Vagina (tissue), 2 donors: ENCODE measurements at regions of chr5 and their contacts with region 1.

Region 1: GRCh38 chr5:139787568-139788293 is 7.9 kb upstream of the PSD2 start:
- DNase-seq: no peak
- H3K4me3 ChIP-seq: peak overlapping the region; percentile 46 to 52
- H3K27ac ChIP-seq: peak overlapping the region; percentile 79
- H3K4me1 ChIP-seq: peaks cover 12% of the 10 kb centered on the region
- H3K27me3 ChIP-seq: no peaks in the 10 kb centered on the region
- CTCF ChIP-seq: peak; percentile 83 to 97 (median 91)
- POLR2A ChIP-seq: no peak

Region 2: GRCh38 chr5:139517683-139518564 is 269.8 kb before region 1 on chr5:
- intact Hi-C with region 1: no loop called
- DNase-seq: peak in 1 of 2 donors; percentile 89
- H3K4me3 ChIP-seq: peak overlapping the region; percentile 47 to 51
- H3K27ac ChIP-seq: peak overlapping the region; percentile 91
- H3K4me1 ChIP-seq: peaks cover 12% of the 10 kb centered on the region
- H3K27me3 ChIP-seq: no peaks in the 10 kb centered on the region
- CTCF ChIP-seq: peak; percentile 77 to 96 (median 90)
- POLR2A ChIP-seq: peak in 1 of 2 donors; percentile 19

Region 3: DNA sequence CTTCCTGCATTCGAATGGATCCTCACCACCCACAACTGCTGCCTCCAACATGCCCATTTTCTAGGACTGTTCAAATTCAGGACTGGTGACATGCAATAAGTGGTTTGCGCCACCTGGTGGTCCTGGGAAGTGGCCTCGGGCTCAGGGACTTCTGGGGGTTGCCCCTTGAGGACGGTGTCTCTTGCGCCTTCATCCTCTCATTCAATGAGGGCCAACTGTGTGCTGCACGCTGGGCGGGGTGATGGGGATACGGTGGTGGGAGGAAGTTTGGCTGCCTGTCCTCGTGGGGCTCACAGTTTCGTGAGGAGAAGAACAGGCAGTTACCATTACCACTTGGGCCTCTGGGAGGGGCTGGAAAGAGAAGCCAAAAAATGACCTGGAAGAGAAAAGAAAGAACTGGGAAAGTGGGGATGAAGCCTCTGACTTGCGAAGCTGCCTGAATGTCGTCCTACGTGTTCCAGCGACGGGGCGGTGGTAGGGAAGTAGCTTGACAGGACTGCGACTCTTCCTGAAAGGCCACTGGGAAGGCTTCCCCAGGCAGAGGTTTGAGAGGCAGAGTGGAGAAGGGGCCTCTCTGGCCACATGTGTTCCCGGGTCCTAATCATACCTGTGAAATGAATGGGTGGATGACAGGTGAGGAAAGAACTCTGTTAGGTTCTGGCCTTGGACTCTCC is 56.9 kb after region 1 on chr5:
- intact Hi-C with region 1: loop called (anchors 5 kb)
- DNase-seq: no peak
- H3K4me3 ChIP-seq: no peak overlapping the region
- H3K27ac ChIP-seq: no peak overlapping the region
- H3K4me1 ChIP-seq: peaks cover 8% of the 10 kb centered on the region
- H3K27me3 ChIP-seq: no peaks in the 10 kb centered on the region
- CTCF ChIP-seq: peak; percentile 12 to 45 (median 31)
- POLR2A ChIP-seq: no peak

Region 4: GRCh38 chr5:139863855-139864558 is 76.3 kb after region 1 on chr5:
- intact Hi-C with region 1: loop called (anchors 2 kb)
- DNase-seq: no peak
- H3K4me3 ChIP-seq: no peak overlapping the region
- H3K27ac ChIP-seq: peak overlapping the region; percentile 31
- H3K4me1 ChIP-seq: peaks cover 19% of the 10 kb centered on the region
- H3K27me3 ChIP-seq: no peaks in the 10 kb centered on the region
- CTCF ChIP-seq: peak; percentile 65 to 83 (median 83)
- POLR2A ChIP-seq: no peak

Region 5: DNA sequence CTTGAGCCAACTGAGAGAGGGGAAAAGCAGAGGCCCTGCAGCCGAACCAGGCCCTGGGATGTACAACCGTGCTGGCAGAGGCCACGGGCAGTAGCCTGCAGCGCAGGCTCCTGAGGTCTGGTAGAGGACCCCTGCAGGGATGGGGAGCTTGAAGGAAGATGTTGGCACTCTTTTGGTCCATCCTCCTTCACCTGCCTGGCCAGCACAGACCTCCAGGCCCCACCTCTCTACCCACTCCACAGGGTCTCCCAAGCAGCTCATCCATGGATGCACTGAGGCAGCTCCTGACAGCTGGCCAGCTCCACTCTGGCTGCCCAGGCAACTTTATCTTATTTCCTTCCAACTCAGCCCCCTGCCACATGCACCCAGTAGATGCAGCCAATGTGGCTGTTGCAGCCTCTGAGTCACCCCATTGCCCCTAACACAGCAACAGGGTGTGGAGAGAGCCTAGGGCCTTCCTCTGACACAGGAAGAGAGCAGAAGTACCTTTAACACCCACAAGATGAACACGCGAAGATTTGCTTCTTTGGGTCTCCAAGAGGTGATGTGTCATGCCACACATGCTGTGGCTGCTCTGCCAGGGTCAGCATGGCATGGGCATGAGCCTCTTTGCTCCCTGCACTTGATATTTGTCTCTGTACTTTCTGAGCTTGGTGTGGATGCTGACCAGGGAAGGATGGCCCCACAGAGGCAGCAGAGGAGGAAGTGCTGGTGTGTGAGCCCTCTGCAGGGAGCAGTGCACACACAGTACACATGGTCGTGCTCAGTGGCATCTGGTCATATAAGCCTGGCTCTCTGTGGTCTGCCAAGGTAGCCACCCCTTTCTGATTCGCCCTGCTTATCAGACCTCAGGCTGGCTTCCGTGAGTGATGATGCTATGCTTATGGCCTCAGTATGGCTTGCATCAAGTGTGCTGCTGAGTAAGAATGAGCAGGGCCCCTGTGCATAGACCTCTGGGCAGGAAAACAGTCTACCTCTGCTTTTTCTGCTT is 138.2 kb after region 1 on chr5:
- intact Hi-C with region 1: no loop called
- DNase-seq: no peak
- H3K4me3 ChIP-seq: no peak overlapping the region
- H3K27ac ChIP-seq: no peak overlapping the region
- H3K4me1 ChIP-seq: no peaks in the 10 kb centered on the region
- H3K27me3 ChIP-seq: no peaks in the 10 kb centered on the region
- CTCF ChIP-seq: no peak
- POLR2A ChIP-seq: no peak

Region 6: GRCh38 chr5:139968547-139969261 is 181.0 kb after region 1 on chr5:
- intact Hi-C with region 1: loop called (anchors 5 kb)
- DNase-seq: peak; percentile 84 to 96
- H3K4me3 ChIP-seq: no peak overlapping the region
- H3K27ac ChIP-seq: no peak overlapping the region
- H3K4me1 ChIP-seq: no peaks in the 10 kb centered on the region
- H3K27me3 ChIP-seq: no peaks in the 10 kb centered on the region
- CTCF ChIP-seq: peak; percentile 98 to 100 (median 99)
- POLR2A ChIP-seq: no peak